Heart left ventricle (tissue), 16 donors: ENCODE measurements at regions of chr5 and their contacts with region 1.

Region 1: GRCh38 chr5:38556599-38557305 is at the start of gene LIFR:
- DNase-seq: peak; percentile 87 to 93 (median 89)
- ATAC-seq: peak; percentile 56 to 93 (median 88)
- H3K4me3 ChIP-seq: peak within 1 kb of the TSS; percentile 69 to 96 (median 86)
- H3K27ac ChIP-seq: peak within 1 kb of the TSS; percentile 95 to 100 (median 98)
- H3K4me1 ChIP-seq: peaks cover 0 to 46% (median 27%) of the 10 kb centered on the region in 12 donors
- H3K27me3 ChIP-seq: peaks cover 0 to 25% (median 0%) of the 10 kb centered on the region in 9 donors
- CTCF ChIP-seq: no peak
- POLR2A ChIP-seq: peak in 1 of 2 donors; percentile 63
- total RNA-seq, gene LIFR: 34.2 to 66.8 (median 39.8) TPM

Region 2: DNA sequence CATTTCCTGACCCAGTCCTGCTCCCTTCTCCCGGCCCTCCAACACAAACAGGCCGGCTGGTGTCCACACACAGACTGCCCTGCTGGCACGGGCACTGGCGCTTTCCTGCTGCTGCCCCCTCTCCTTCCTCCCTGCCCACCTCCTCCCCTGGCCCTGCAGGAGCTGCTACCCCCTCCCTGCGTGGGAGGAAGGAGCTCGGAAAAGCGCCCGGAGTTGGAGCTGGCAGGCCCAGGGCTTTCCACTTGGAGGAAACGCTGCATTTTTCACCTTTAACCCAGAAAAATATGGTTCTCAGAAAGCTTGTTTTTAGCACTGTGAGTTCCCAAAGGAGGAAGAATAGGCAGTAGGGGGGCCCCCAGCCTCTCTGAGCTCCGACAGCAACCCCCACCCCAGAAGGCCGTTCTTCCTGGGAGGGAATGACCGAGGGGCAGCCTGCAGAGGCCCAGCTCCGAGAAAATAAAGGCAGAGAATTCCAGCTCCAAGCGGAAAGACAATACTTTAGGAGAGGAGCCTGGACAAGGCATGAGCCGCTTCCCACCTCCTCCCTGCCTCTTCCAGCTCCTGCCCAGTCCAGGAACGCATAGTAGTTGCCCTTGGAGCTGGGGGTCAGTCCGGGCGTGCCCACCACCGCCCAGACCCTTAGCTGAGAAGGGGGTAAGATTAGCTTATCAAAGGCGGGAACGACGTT is 89.3 kb before region 1 on chr5:
- intact Hi-C with region 1: loop called in 1 of 10 experiments (anchors 2 kb)
- DNase-seq: peak in 4 of 5 donors; percentile 53 to 77 (median 59)
- ATAC-seq: peak; percentile 5 to 40 (median 14)
- H3K4me3 ChIP-seq: peak overlapping the region in 1 of 12 donors; percentile 3
- H3K27ac ChIP-seq: peak overlapping the region; percentile 62 to 88 (median 80)
- H3K4me1 ChIP-seq: peaks cover 17 to 81% (median 71%) of the 10 kb centered on the region in 12 donors
- H3K27me3 ChIP-seq: peaks cover 0 to 50% (median 0%) of the 10 kb centered on the region in 9 donors
- CTCF ChIP-seq: no peak
- POLR2A ChIP-seq: no peak

Region 3: DNA sequence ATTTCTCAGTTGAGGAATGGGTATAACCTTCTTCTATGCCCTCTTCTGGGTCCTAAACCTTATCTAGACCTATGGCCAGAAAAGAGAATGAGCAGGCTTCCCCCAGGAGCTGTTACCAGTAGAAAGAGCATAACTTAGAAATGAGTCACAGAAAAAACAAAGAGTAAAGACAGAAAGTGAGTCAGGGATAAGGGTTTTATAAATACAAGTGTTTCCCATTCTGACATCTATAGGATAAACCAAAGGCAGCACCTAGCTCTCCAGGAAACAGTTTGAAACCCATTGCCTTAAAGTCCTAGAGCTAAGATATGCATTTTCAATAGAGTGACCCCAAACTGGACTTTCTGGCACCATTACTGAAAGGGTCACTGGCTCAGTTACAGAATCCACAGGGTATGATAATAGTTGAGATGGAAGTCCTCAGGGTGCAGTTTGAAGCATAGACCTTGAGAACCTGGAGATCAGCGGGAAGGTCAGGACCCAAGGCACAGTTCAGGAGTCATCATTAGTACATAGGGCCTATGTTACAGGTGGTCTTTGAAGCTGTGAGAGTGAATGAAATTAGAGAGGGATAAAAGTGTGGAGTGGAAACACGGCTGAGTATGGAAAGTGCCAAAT is 42.4 kb after region 1 on chr5:
- intact Hi-C with region 1: loop called in 5 of 10 experiments (anchors 1 to 5 kb)
- DNase-seq: no peak
- ATAC-seq: no peak
- H3K4me3 ChIP-seq: no peak overlapping the region
- H3K27ac ChIP-seq: peak overlapping the region in 1 of 12 donors; percentile 32
- H3K4me1 ChIP-seq: peaks cover 3 to 59% (median 34%) of the 10 kb centered on the region in 12 donors
- H3K27me3 ChIP-seq: no peaks in the 10 kb centered on the region
- CTCF ChIP-seq: no peak
- POLR2A ChIP-seq: no peak

Region 4: GRCh38 chr5:38660194-38660668 is 103.5 kb after region 1 on chr5:
- intact Hi-C with region 1: loop called in 7 of 10 experiments (anchors 2 to 10 kb)
- DNase-seq: peak in 4 of 5 donors; percentile 18 to 63 (median 40)
- ATAC-seq: peak; percentile 78 to 93 (median 90)
- H3K4me3 ChIP-seq: peak overlapping the region in 6 of 12 donors; percentile 10 to 41 (median 32)
- H3K27ac ChIP-seq: peak overlapping the region in 8 of 12 donors; percentile 18 to 59 (median 44)
- H3K4me1 ChIP-seq: peaks cover 0 to 32% (median 9%) of the 10 kb centered on the region in 12 donors
- H3K27me3 ChIP-seq: no peaks in the 10 kb centered on the region
- CTCF ChIP-seq: no peak
- POLR2A ChIP-seq: peak in 1 of 2 donors; percentile 37

Region 5: GRCh38 chr5:38666668-38667498 is 110.1 kb after region 1 on chr5:
- intact Hi-C with region 1: loop called (anchors 2 to 10 kb)
- DNase-seq: peak; percentile 32 to 63 (median 51)
- ATAC-seq: peak; percentile 92 to 96 (median 94)
- H3K4me3 ChIP-seq: no peak overlapping the region
- H3K27ac ChIP-seq: peak overlapping the region in 3 of 12 donors; percentile 5 to 50 (median 50)
- H3K4me1 ChIP-seq: peaks cover 0 to 37% (median 13%) of the 10 kb centered on the region in 12 donors
- H3K27me3 ChIP-seq: no peaks in the 10 kb centered on the region
- CTCF ChIP-seq: peak; percentile 36 to 87 (median 72)
- POLR2A ChIP-seq: no peak

Region 6: GRCh38 chr5:38780950-38781349 is 224.2 kb after region 1 on chr5:
- intact Hi-C with region 1: loop called in 1 of 10 experiments (anchors 5 kb)
- DNase-seq: peak in 4 of 5 donors; percentile 70 to 81 (median 75)
- ATAC-seq: peak in 3 of 4 donors; percentile 58 to 75 (median 64)
- H3K4me3 ChIP-seq: no peak overlapping the region
- H3K27ac ChIP-seq: no peak overlapping the region
- H3K4me1 ChIP-seq: peaks cover 0 to 45% (median 26%) of the 10 kb centered on the region in 12 donors
- H3K27me3 ChIP-seq: no peaks in the 10 kb centered on the region
- CTCF ChIP-seq: peak in 11 of 12 donors; percentile 27 to 58 (median 36)
- POLR2A ChIP-seq: no peak

Region 7: DNA sequence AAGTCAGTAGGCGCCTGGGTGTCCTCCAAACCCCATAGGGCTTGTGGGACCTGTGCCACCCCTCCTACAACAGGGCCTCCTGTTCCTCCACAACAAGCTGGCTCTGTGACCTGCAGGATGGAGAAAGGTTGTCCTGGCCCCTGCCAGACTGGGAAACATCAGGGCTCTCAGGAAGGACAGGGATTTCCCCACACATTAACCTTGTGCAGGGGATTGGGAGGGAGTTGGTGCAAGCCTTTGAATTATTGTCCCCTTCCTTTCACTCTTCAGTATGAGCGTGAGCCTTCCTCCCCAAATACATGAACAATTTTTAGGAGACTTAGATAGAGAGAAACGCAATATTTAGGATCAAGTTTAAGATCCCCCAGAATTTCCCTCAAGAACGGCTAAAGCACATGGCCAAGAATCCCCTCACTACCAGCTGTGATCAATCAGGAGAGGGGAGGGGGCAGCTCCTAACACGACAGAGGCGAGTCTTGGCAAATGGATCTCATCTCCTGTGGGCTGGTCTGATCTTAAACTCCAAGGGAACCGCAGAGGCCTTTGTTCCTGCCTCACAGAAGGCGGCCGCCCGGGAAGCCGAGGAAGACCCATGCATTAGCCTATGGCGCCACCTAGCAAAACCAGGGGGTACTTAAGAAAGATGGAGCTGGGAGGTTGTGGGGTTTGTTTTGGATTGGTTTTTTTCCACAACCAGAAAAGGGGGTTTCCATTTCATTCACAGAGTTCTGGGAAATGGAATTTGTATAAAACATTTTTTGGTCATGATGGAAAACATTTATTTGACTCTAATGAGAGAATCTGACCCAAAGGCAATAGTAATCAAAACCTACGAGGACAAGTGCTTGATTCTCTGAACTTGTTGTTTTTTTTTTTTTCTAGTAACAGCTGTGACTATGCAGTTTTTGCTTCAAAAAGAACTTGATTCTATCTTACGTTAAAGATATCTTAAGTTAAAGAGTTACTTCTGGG is 252.9 kb after region 1 on chr5:
- intact Hi-C with region 1: loop called in 7 of 10 experiments (anchors 5 to 10 kb)
- DNase-seq: peak; percentile 79 to 86 (median 85)
- ATAC-seq: peak; percentile 76 to 92 (median 90)
- H3K4me3 ChIP-seq: no peak overlapping the region
- H3K27ac ChIP-seq: peak overlapping the region in 7 of 12 donors; percentile 4 to 60 (median 40)
- H3K4me1 ChIP-seq: peaks cover 0 to 44% (median 16%) of the 10 kb centered on the region in 12 donors
- H3K27me3 ChIP-seq: peaks cover 0 to 6% (median 0%) of the 10 kb centered on the region in 9 donors
- CTCF ChIP-seq: peak; percentile 72 to 93 (median 88)
- POLR2A ChIP-seq: no peak